HCT116 (cell line): ENCODE measurements at regions of chr2 and their contacts with region 1.

Region 1: DNA sequence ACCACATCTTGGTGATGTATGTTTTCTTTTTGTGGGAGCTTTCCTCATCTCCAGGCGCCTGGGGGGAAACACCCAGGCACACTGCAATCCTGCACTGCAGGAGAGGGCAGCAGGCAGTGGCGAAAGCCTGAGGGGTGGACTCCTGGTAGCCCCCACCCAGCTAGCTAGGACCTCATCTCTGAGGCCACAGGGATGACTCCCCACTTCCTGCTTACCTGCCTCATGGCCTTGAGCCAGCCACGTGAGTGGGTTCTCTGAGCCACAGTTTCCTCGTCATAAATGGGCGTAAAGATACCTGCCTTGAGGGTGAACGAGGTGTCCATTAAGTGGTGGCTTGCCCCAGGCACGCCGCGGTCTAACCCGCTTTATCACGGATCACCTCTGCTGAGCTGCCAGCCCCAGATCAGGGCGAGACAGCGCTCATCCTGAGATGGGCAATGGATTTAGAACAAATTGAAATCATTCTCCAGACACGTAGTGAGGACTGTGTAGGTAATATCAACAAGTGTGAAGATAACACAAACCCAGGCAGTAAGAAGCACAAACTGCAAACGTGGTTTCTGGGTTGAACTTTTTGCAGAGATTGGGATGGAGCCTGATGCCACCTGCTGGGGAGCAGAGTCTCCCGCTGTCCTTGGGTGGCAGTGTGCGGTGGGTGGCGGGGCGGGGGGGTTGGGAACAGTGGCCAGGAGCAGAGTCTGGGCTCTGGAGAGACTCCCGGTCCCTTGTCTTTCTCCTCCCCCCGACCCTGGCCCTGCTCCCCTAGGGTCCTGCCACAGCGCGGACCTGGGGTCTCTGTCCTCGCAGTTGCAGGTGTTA is 19.3 kb downstream of the TRAF3IP1 start:
- DNase-seq: no peak
- ATAC-seq: no peak
- H3K4me3 ChIP-seq: no peak overlapping the region
- H3K27ac ChIP-seq: no peak overlapping the region
- H3K4me1 ChIP-seq: no peaks in the 10 kb centered on the region
- H3K27me3 ChIP-seq: no peaks in the 10 kb centered on the region
- CTCF ChIP-seq: peak; percentile 17 to 33 (median 18); a peak in 3 of 6 replicates
- POLR2A ChIP-seq: no peak
- RAD21 ChIP-seq: peak; percentile 36

Region 2: DNA sequence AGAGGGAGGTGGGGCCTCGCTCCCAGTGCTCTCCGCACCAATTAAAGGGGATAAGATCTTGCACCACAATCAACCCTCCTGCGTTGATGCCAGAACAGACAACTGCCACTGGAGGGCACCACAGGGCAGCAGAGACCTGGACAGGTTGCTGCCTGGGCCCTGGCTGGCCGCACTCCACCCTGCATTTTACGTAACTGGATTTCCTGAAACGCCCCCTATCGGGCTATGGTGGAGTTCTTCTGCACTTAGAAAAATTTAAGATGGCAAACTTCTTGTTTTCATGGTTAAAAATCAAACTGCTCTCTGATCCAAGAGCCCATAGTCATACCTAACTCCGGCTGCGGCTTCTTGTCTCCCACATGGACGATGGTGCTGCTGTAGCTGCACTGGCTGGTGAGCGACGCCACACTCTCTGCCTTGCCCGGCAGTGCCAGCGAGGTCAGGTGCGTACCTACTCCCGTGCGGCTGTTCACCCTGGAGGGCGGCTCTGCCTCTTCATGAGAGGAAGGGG is 83.0 kb before region 1 on chr2:
- CTCF ChIA-PET with region 1: no interaction called
- POLR2A ChIA-PET with region 1: no interaction called
- RAD21 ChIA-PET with region 1: no interaction called
- intact Hi-C with region 1: loop called (anchors 10 kb)
- DNase-seq: peak; percentile 92
- ATAC-seq: peak; percentile 98
- H3K4me3 ChIP-seq: no peak overlapping the region
- H3K27ac ChIP-seq: no peak overlapping the region
- H3K4me1 ChIP-seq: no peaks in the 10 kb centered on the region
- H3K27me3 ChIP-seq: no peaks in the 10 kb centered on the region
- CTCF ChIP-seq: peak; percentile 97 to 99 (median 98)
- POLR2A ChIP-seq: no peak
- RAD21 ChIP-seq: peak; percentile 92